ENCODE measurements at regions of chr9 and their contacts with region 1.

Region 1: DNA sequence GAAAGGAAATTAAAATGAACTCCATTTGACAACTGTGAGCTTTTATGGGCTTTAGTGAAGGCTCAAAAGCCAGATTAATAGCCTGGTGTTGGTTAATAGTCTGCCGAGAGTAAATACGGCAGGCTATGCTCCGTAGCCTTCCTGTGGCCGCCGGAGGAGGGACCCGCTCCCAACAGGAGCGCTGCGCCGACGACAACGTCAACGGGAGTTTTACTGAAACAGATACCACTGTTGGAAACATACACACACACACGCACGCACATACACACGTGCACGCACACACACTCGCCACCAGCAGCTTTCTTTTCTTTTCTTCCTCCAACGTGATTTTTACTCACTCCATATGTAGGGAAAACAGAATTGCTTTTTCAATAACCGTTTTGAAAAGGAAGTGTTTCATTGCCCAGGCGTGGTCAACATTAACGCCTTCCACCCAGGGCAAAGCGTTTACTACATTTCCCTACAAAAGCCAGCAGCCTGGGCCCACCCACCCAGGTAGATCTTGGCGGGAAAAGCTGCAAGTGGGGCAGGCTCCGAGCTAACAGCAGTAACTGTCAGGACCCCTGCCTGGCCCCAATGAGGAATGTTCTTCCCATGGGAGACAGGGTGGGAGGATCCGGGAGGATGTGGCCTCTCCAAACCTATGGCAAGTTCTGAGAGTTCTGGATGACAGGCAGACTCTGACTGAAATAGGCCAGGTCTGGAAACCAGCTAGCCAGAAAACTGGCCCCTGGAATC is 72.3 kb downstream of the PAX5 start:
- DNase-seq: no peak
- ATAC-seq: no peak
- H3K4me3 ChIP-seq: peak overlapping the region in 1 of 10 donors; percentile 24
- H3K27ac ChIP-seq: no peak overlapping the region
- H3K4me1 ChIP-seq: peaks cover 0 to 3% (median 0%) of the 10 kb centered on the region in 9 donors
- H3K27me3 ChIP-seq: peaks cover 0 to 50% (median 19%) of the 10 kb centered on the region in 7 donors
- CTCF ChIP-seq: no peak

Region 2: DNA sequence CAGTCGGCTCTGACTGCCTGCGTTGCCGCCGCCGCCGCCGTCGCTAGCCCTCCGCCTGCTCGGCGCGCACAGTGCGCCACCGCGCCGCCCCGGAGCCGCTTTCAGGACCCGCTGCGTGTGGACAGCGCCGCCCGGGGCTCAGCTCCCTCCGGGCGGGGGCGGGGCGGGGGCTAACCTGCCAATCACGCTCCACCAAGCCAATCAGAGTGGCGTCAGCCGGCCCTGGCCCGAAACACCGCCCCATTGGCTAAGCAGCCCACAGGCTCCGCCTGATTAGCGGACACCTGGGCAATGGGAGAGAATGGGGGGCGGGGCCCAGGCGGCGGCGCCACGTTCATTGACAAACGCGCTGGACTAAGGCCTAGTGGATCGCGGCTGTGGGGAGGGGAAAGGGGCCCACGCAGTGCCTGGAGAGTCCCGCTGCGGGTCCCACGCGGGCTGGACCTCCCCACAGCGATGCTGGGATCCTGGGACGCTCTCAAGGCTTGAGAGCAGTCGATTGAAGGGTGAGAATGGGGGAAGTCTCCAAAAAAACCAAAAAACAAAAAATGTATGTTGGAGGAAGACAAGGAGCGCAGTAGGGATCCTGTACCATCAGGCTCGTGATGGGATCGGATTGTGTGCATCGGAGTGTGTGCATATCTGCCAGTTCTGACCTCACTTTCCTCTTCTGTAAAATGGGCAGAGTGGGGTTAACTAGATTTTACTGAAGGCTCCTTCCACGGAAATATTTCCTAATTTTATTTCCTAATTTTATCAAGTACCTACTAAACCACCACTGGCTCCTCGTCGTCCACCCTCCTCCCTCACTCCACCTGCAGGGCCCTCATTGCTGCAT is 66.1 kb after region 1 on chr9:
- intact Hi-C with region 1: loop called in 1 of 10 experiments (anchors 10 kb)
- DNase-seq: peak; percentile 82 to 85
- ATAC-seq: peak; percentile 88 to 98 (median 97)
- H3K4me3 ChIP-seq: peak overlapping the region in 9 of 10 donors; percentile 1 to 46 (median 30)
- H3K27ac ChIP-seq: no peak overlapping the region
- H3K4me1 ChIP-seq: peaks cover 10 to 51% (median 41%) of the 10 kb centered on the region in 9 donors
- H3K27me3 ChIP-seq: peaks cover 54 to 100% (median 100%) of the 10 kb centered on the region in 7 donors
- CTCF ChIP-seq: no peak

Region 3: GRCh38 chr9:37382161-37382981 is 420.6 kb after region 1 on chr9:
- intact Hi-C with region 1: no loop called
- DNase-seq: no peak
- ATAC-seq: no peak
- H3K4me3 ChIP-seq: no peak overlapping the region
- H3K27ac ChIP-seq: no peak overlapping the region
- H3K4me1 ChIP-seq: no peaks in the 10 kb centered on the region
- H3K27me3 ChIP-seq: no peaks in the 10 kb centered on the region
- CTCF ChIP-seq: no peak